MCF 10A (cell line): ENCODE measurements at regions of chr3 and their contacts with region 1.

Region 1: DNA sequence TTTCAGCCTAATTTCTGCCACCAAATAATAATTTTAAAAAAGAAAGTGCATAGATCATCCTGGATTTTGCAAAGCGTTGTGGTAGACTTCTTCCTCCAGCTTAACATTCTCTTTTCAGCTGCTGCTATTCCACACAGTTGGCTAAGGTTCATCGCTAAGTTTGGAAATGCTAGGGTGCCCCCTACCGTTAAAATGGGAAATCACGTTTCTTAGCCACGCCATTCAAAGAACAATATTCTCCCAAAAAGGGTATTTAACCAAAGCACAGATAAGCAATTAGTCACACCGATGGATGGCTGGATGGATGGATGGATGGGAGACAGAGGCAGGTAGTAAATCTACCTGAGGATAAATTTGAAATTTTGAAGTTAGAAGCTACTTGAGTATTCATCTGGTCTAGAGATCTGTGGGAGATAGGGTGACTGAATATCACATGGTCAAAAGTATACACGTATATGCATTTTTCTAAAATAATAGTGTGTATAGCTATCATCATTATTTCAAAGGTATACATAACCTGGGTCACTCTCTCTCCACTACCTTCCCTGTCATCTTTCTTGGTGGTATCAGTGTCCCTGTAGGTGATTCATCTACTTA is 67.2 kb downstream of the EFHB start:
- DNase-seq: peak; percentile 75
- H3K4me3 Mint-ChIP-seq: no peak overlapping the region
- H3K27ac Mint-ChIP-seq: no peak overlapping the region
- H3K4me1 Mint-ChIP-seq: no peaks in the 10 kb centered on the region
- H3K27me3 Mint-ChIP-seq: peaks cover 27% of the 10 kb centered on the region
- CTCF ChIP-seq: peak; percentile 68

Region 2: DNA sequence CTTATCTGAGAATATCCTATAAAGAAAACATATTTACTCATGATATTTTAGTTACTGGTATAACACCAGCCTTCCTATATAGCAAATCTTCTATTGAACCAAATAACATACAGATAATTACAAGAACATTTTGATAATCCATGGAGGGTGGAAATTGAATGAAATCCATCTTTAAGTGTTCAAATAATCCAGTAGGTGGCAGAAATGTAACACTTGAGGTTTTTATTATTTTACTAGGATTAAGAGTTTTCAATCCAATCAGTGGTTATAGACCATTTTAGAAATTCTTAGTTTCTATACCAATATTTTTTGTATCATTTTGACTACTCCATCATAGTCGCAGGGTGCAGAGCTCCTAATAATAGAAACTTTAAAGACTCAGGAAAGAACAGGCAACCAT is 820.4 kb before region 1 on chr3:
- CTCF ChIA-PET with region 1: interaction called, 5 read pairs
- POLR2A ChIA-PET with region 1: no interaction called
- intact Hi-C with region 1: loop called (anchors 5 kb)
- DNase-seq: peak; percentile 13
- H3K4me3 Mint-ChIP-seq: no peak overlapping the region
- H3K27ac Mint-ChIP-seq: no peak overlapping the region
- H3K4me1 Mint-ChIP-seq: no peaks in the 10 kb centered on the region
- H3K27me3 Mint-ChIP-seq: peaks cover 7% of the 10 kb centered on the region
- CTCF ChIP-seq: peak; percentile 21

Region 3: GRCh38 chr3:19348929-19349564 is 517.8 kb before region 1 on chr3:
- CTCF ChIA-PET with region 1: interaction called, 85 read pairs
- POLR2A ChIA-PET with region 1: interaction called, 5 read pairs
- intact Hi-C with region 1: loop called (anchors 1 kb)
- DNase-seq: peak; percentile 41
- H3K4me3 Mint-ChIP-seq: no peak overlapping the region
- H3K27ac Mint-ChIP-seq: no peak overlapping the region
- H3K4me1 Mint-ChIP-seq: no peaks in the 10 kb centered on the region
- H3K27me3 Mint-ChIP-seq: peaks cover 65% of the 10 kb centered on the region
- CTCF ChIP-seq: peak; percentile 82

Region 4: DNA sequence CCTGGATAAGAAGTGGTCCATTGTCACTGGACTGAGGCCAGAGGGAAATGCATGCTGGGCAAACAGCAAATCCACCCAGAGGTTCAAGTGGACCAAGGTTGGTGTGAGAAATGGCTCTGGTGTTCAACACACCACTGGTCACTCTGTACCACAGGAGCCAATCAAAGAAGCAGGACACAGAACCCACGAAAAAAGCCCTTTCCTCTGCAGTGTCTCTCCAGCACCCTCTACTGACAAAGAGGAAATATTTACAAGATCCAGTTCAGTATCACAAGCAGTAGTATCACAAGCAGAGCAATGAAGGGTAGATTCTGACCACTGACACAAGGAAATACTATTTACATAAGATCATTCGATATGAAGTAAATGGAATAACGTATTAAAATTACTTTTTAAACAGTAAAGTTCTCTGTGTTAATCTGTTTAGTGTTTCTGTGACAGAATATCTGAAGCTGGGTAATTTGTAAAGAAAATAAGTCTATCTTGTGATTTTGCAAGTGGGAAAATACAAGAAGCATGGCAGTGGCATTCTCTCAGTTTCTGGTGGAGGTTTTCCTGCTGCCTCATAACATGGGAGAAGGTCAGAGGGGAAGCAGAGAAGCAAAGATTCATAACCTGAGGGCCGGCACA is 323.5 kb before region 1 on chr3:
- CTCF ChIA-PET with region 1: interaction called, 5 read pairs
- POLR2A ChIA-PET with region 1: no interaction called
- intact Hi-C with region 1: loop called (anchors 1 kb)
- DNase-seq: peak; percentile 55
- H3K4me3 Mint-ChIP-seq: no peak overlapping the region
- H3K27ac Mint-ChIP-seq: no peak overlapping the region
- H3K4me1 Mint-ChIP-seq: no peaks in the 10 kb centered on the region
- H3K27me3 Mint-ChIP-seq: peaks cover 35% of the 10 kb centered on the region
- CTCF ChIP-seq: peak; percentile 64

Region 5: DNA sequence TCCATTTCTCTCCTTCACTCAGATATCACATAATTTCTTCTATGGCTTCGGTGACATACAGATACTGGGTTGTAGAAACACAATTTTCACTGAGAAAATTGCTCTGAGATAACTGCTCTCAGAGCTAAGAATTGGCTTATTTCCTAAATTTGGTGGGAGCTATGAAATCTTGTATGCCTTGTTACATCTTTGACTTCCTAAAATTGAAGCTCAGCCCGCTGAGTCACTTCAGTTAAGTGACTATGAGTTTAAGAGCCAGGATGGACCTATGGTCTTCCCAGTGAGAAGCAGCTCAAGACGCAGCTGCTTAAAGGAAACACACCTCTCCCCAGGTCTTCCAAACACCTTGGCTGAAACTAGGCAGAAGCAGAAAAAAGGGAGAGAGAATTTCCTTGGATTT is 10.8 kb after region 1 on chr3:
- CTCF ChIA-PET with region 1: interaction called, 22 read pairs
- POLR2A ChIA-PET with region 1: no interaction called
- intact Hi-C with region 1: no loop called
- DNase-seq: no peak
- H3K4me3 Mint-ChIP-seq: no peak overlapping the region
- H3K27ac Mint-ChIP-seq: no peak overlapping the region
- H3K4me1 Mint-ChIP-seq: no peaks in the 10 kb centered on the region
- H3K27me3 Mint-ChIP-seq: no peaks in the 10 kb centered on the region
- CTCF ChIP-seq: no peak

Region 6: GRCh38 chr3:20352546-20353179 is 485.8 kb after region 1 on chr3:
- CTCF ChIA-PET with region 1: no interaction called
- POLR2A ChIA-PET with region 1: no interaction called
- intact Hi-C with region 1: no loop called
- DNase-seq: peak; percentile 34
- H3K4me3 Mint-ChIP-seq: no peak overlapping the region
- H3K27ac Mint-ChIP-seq: no peak overlapping the region
- H3K4me1 Mint-ChIP-seq: peaks cover 10% of the 10 kb centered on the region
- H3K27me3 Mint-ChIP-seq: no peaks in the 10 kb centered on the region
- CTCF ChIP-seq: no peak